Activated CD4-positive, alpha-beta T cell treated with anti-CD3 and anti-CD28 coated beads, Interleukin-2, amount 10 ng/mL, durations not matched to agents 24 days and 14 days (primary cell): ENCODE measurements at regions of chr7 and their contacts with region 1.

Region 1: DNA sequence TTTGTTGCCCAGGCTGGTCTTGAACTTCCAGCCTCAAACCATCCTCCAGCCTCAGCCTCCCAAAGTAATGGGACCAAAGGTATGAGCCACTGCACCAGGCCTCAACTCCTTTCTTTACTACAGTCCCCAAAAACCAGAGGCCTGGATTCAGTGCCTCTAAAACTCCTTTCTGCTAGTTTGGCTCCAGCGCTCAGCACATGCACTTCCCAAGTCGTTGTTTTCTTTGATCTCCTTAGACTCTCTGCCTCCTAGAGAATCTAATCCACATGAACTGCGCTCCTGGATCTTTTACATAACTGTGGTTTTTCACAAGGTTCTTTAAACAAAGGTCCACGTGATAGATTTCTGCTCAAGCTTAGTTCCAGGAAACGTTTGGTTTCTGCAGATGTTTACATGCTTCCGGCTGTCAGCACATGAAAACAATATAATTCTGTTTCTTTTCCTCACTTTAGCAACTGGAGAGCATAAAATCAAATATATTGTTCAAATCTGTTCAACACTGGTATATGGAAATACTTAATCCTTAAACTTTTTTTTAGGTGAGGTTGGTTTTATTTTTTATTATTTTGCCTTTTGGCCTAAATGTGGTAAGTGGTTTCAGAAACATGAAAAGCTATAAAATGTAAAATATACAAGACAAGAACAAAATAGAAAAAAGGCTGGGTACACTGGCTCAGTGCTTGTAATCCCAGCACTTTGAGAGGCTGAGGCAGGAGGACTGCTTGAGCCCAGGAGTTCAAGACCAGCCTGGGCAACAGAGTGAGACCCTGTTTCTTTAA is 270.5 kb upstream of the MKLN1 start:
- DNase-seq: peak; percentile 86
- H3K4me3 Mint-ChIP-seq: peak overlapping the region; percentile 74
- H3K27ac Mint-ChIP-seq: peak overlapping the region; percentile 86
- H3K4me1 Mint-ChIP-seq: peaks cover 42% of the 10 kb centered on the region
- H3K27me3 Mint-ChIP-seq: no peaks in the 10 kb centered on the region

Region 2: DNA sequence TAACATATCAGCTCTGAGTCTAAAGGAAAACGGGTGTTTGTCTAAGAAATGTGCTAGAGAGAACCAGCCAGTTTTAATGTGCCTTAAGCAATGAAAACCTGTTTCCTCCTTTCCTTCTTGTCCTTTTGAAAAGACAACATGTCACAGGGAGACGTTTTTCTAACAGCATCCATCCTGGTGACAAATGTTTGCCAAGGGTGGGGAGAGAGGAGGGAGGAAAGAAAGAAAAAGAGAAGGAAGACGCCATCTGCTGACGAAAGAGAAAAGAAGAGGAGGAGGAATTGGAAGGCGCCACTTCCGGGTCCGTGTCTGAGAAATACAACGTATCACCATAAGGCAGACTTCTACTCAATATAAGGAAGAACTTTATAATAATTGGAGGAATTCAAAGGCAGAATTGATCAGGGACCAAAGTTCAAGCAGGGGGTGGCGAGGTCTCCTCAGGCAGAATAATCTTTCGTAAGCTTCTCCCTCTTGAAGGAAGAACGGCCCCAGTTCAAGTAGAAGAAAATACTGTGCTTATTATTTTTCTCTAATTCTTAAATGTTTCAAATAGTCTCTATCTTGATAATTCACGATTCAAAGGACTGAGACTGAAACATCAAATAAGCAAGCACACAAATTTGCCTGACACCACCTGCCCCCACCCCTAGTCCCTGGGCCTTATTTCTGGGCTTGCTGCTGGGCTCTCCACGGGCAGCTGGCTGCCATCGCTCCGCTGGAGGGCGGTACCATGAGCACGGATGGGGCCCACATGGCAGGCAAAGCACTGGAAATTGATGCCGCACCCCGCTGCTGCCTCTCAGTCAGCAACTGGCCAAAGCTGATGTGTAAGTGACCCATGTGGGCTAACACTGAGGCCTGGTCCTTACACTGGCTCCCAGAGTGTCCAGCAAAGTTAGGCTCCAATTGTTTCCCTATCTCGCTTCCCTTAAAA is 49.5 kb before region 1 on chr7:
- intact Hi-C with region 1: no loop called
- DNase-seq: peak; percentile 89
- H3K4me3 Mint-ChIP-seq: peak overlapping the region; percentile 41
- H3K27ac Mint-ChIP-seq: peak overlapping the region; percentile 86
- H3K4me1 Mint-ChIP-seq: peaks cover 54% of the 10 kb centered on the region
- H3K27me3 Mint-ChIP-seq: no peaks in the 10 kb centered on the region

Region 3: DNA sequence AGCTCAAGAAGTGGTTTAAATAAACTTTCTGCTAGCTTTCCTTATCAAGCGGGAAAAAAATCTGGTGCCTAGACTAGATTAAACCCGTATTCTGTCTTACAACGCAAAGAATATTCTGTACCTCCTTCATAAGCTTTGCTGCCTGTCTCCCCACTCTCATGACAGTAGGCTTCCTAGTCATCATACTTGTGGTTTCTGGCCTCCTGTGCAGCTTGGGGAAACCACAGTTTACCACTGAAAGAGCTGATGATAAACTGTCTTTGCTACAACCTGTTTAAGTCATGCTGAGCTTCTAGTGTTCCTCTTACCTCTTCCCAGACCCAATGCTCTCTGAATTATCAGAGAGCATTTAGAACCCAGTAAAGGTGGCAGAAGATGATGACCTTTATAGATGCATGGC is 444.2 kb after region 1 on chr7:
- intact Hi-C with region 1: loop called (anchors 1 kb)
- DNase-seq: peak; percentile 90
- H3K4me3 Mint-ChIP-seq: peak overlapping the region; percentile 42
- H3K27ac Mint-ChIP-seq: peak overlapping the region; percentile 68
- H3K4me1 Mint-ChIP-seq: peaks cover 34% of the 10 kb centered on the region
- H3K27me3 Mint-ChIP-seq: no peaks in the 10 kb centered on the region

Region 4: DNA sequence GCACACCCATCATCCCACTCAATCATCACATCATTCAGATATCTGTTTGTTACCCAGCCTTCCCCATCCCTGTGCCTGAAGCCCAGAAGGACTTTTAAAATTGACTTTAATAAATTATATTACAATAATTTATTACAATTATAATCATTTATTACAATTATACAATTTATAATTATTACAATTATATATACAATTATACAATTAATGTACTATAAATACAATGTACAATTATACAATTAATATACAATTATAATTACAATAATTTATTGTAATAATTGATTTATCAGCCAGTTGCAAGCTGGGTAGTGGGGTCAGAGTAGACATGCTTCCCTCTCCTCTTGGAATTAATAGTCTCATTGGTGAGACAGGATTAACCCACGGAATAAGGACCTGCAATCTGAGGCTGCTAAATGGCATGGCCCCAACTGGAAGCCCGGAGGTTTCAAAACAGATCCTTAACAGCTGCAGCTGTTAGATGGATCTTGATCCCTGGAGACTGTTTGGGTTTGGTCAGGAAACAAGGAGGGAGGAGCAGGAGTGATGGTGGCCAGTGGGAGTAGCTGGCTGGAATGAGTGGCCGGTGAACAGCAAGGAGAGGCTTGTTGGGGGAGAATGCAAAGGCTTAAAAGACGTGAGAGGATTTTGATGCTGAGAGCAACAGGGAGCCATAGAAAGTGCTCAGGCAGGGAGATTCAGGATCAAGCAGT is 902.1 kb after region 1 on chr7:
- intact Hi-C with region 1: no loop called
- DNase-seq: no peak
- H3K4me3 Mint-ChIP-seq: no peak overlapping the region
- H3K27ac Mint-ChIP-seq: no peak overlapping the region
- H3K4me1 Mint-ChIP-seq: no peaks in the 10 kb centered on the region
- H3K27me3 Mint-ChIP-seq: peaks cover under 1% of the 10 kb centered on the region